ENCODE measurements at regions of chr12 and their contacts with region 1.

Region 1: DNA sequence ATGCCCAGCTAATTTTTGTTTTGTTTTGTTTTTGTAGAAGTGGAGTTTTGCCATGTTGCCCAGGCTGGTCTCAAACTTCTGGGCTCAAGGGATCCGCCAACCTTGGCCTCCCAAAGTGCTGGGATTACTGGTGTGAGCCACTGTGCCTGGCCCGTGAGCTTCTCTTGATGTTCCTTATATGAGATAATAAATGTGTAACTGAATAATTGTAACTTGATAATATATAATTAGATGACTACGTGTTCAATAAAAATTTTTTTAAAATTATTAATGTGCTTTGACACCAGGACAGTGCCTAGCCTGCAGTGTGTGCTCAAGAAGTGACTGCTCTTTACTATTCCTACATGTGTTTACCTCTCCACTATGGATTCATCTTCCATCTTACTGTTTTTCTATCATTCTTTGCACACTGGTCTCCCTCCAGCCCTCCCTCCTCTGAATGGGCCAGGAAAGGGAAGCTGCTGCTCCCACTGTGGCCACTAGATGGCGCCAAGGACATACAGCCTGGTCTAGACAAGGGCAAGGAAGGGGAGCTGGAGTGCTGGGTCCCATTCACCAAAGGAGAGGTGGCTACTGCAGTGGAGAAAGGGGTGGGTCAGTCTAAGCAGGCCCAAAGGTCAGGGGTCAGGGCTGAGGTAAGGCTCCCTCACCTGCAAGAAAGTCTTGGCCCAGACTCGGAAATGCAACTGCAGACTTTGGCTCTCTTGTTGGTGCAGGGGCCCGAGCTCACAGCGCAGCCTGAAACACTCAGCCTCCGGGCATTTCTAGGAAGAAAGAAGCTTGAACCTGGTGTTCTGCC is 14.7 kb upstream of the ZNF385A start:
- DNase-seq: peak; percentile 90
- H3K4me3 Mint-ChIP-seq: no peak overlapping the region
- H3K27ac Mint-ChIP-seq: no peak overlapping the region
- H3K4me1 Mint-ChIP-seq: peaks cover 21% of the 10 kb centered on the region
- H3K27me3 Mint-ChIP-seq: no peaks in the 10 kb centered on the region

Region 2: GRCh38 chr12:54379401-54380201 is 19.6 kb before region 1 on chr12:
- CTCF ChIA-PET with region 1: interaction called, 26 read pairs
- POLR2A ChIA-PET with region 1: no interaction called
- DNase-seq: peak; percentile 93
- H3K4me3 Mint-ChIP-seq: peak overlapping the region; percentile 6
- H3K27ac Mint-ChIP-seq: no peak overlapping the region
- H3K4me1 Mint-ChIP-seq: peaks cover 10% of the 10 kb centered on the region
- H3K27me3 Mint-ChIP-seq: no peaks in the 10 kb centered on the region

Region 3: DNA sequence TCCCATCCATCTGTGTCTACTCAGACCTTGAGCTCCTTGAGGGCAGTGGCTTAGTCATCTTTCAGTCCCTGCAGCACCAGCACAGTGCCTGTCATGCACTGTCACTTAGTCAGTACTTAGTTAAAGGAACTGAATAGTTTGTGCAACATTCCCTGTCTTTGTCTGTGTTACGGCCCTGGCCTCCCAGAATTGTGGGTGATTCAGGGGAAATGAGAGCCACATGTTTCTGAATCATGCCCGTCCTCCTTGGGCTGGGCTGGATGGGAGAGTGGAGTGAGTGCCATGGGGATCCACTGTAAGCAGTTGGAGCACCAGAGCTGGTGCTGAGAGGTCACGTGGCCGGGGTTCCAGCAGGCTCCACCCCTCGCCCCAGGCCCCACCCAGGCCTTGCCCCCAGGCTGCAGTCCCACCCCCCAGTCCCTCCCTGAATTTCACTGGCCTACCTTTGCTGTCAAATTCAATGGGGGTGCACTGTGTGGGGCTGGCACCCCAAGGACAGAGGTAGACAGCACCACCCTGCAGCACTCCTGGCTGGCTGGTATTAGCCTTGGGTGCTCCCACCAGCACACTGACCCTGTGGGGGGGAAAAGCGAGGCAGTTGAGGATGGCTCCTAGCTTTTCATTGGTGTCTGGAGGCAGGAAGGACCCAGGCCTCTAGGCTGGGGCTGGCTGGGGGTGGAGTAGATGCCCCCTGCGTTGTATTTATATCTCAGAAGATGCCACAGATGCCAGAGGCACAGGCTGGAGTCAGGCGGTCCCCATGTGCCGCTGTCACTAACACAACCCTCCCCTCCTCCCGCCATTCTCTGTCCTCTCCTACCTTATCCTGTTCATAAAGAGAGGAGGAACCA is 12.4 kb after region 1 on chr12:
- CTCF ChIA-PET with region 1: interaction called, 64 read pairs
- POLR2A ChIA-PET with region 1: interaction called, 3 read pairs
- DNase-seq: peak; percentile 69
- H3K4me3 Mint-ChIP-seq: peak overlapping the region; percentile 78
- H3K27ac Mint-ChIP-seq: peak overlapping the region; percentile 95
- H3K4me1 Mint-ChIP-seq: peaks cover 71% of the 10 kb centered on the region
- H3K27me3 Mint-ChIP-seq: no peaks in the 10 kb centered on the region

Region 4: GRCh38 chr12:54431911-54432814 is 33.0 kb after region 1 on chr12:
- CTCF ChIA-PET with region 1: interaction called, 115 read pairs
- POLR2A ChIA-PET with region 1: no interaction called
- DNase-seq: peak; percentile 33
- H3K4me3 Mint-ChIP-seq: peak overlapping the region; percentile 13
- H3K27ac Mint-ChIP-seq: peak overlapping the region; percentile 46
- H3K4me1 Mint-ChIP-seq: peaks cover 42% of the 10 kb centered on the region
- H3K27me3 Mint-ChIP-seq: peaks cover 19% of the 10 kb centered on the region

Region 5: GRCh38 chr12:54452628-54453027 is 53.4 kb after region 1 on chr12:
- CTCF ChIA-PET with region 1: interaction called, 36 read pairs
- POLR2A ChIA-PET with region 1: no interaction called
- DNase-seq: no peak
- H3K4me3 Mint-ChIP-seq: no peak overlapping the region
- H3K27ac Mint-ChIP-seq: no peak overlapping the region
- H3K4me1 Mint-ChIP-seq: no peaks in the 10 kb centered on the region
- H3K27me3 Mint-ChIP-seq: peaks cover 13% of the 10 kb centered on the region

Measured in activated CD4-positive, alpha-beta T cell treated with anti-CD3 and anti-CD28 coated beads, Interleukin-2, amount 10 ng/mL, durations not matched to agents 7 days and 5 days (primary cell).